ENCODE measurements at regions of chr6 and their contacts with region 1.

Region 1: DNA sequence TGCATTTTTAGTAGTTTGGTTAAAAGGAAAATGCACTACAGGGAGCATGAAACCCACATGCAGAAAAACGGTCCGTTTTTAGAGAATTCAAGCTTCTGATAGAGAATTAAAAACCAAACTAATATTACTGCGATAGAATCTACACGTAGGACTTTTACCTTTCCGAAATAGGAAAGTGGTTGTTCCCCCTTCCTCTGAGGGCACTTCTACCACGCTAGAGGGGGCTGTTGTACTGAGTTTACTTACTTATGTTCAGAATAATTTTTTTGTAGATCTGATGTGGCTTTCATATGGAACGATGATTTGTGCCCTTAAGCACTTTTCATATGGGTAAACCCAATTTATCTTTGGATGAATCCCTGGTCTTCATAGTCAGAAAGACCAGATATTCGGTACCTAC is 264.3 kb upstream of the PLN start:
- DNase-seq: peak; percentile 9 to 46
- ATAC-seq: peak; percentile 75 to 79; a peak in 5 of 6 replicates
- H3K4me3 ChIP-seq: no peak overlapping the region
- H3K27ac ChIP-seq: no peak overlapping the region
- H3K4me1 ChIP-seq: no peaks in the 10 kb centered on the region
- CTCF ChIP-seq: peak; percentile 56
- EP300 ChIP-seq: no peak
- POLR2A ChIP-seq: no peak
- RAD21 ChIP-seq: peak; percentile 68 to 75

Region 2: GRCh38 chr6:118260833-118261232 is 22.9 kb before region 1 on chr6:
- CTCF ChIA-PET with region 1: no interaction called
- POLR2A ChIA-PET with region 1: no interaction called
- DNase-seq: no peak
- ATAC-seq: no peak
- H3K4me3 ChIP-seq: no peak overlapping the region
- H3K27ac ChIP-seq: no peak overlapping the region
- H3K4me1 ChIP-seq: no peaks in the 10 kb centered on the region
- CTCF ChIP-seq: no peak
- EP300 ChIP-seq: no peak
- POLR2A ChIP-seq: no peak
- RAD21 ChIP-seq: no peak

Region 3: GRCh38 chr6:118511930-118512715 is 228.4 kb after region 1 on chr6:
- CTCF ChIA-PET with region 1: interaction called, 13 read pairs
- POLR2A ChIA-PET with region 1: no interaction called
- DNase-seq: no peak
- ATAC-seq: no peak
- H3K4me3 ChIP-seq: no peak overlapping the region
- H3K27ac ChIP-seq: no peak overlapping the region
- H3K4me1 ChIP-seq: no peaks in the 10 kb centered on the region
- CTCF ChIP-seq: no peak
- EP300 ChIP-seq: no peak
- POLR2A ChIP-seq: no peak
- RAD21 ChIP-seq: no peak

Measured in A549 (cell line).